ENCODE measurements at regions of chr22 and their contacts with region 1.

Region 1: DNA sequence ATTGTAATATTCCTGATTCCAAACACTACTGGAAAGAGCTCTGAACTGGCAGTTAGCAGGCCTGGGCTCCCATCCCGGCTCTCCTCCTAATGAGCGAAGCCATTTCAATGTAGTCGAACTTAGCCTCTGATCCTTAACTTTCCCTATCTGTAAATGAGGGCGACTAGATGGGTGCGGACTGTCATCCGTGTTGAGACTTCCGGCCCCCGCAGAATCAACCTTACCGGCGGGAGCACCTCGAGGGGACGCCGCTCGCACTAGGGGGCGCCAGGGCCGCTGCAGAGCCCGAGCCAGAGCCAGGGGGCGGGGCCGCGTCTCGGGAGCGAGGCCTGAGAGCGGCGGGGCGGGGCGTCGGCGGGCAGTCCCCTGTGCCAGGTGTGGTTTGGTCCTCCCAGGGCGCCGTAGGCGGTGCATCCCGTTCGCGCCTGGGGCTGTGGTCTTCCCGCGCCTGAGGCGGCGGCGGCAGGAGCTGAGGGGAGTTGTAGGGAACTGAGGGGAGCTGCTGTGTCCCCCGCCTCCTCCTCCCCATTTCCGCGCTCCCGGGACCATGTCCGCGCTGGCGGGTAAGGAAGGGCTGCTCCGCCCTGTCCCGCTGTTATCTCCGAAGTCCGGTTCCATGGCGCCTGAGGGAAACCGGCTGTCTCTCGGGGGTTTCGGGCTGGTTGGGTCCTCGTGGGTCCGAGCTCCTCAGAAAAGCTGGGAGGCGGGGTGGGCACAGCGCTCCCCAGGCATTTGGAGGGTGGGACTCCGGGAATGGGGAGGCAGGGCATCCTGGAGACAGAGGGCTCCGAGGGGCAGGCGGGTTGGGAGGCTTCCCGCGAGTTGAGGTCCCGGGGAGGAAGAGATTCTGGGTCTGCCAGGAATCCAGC is at the start of gene LIMK2:
- DNase-seq: peak; percentile 96 to 98 (median 97)
- ATAC-seq: peak; percentile 89 to 95 (median 94)
- H3K4me3 ChIP-seq: peak within 1 kb of the TSS; percentile 61 to 97 (median 84)
- H3K27ac ChIP-seq: peak within 1 kb of the TSS; percentile 29 to 92 (median 86)
- H3K4me1 ChIP-seq: peaks cover 0 to 66% (median 47%) of the 10 kb centered on the region in 12 donors
- H3K27me3 ChIP-seq: no peaks in the 10 kb centered on the region
- CTCF ChIP-seq: peak; percentile 74 to 99 (median 91)
- POLR2A ChIP-seq: peak in 1 of 2 donors; percentile 58
- total RNA-seq, gene LIMK2: 7.1 to 33.3 (median 9.4) TPM

Region 2: GRCh38 chr22:30668386-30668710 is 543.7 kb before region 1 on chr22:
- intact Hi-C with region 1: no loop called
- DNase-seq: no peak
- ATAC-seq: no peak
- H3K4me3 ChIP-seq: peak overlapping the region; percentile 48 to 87 (median 76)
- H3K27ac ChIP-seq: peak overlapping the region in 5 of 12 donors; percentile 9 to 71 (median 68)
- H3K4me1 ChIP-seq: peaks cover 0 to 19% (median 11%) of the 10 kb centered on the region in 12 donors
- H3K27me3 ChIP-seq: no peaks in the 10 kb centered on the region
- CTCF ChIP-seq: no peak
- POLR2A ChIP-seq: no peak

Region 3: GRCh38 chr22:31148953-31149627 is 63.0 kb before region 1 on chr22:
- intact Hi-C with region 1: no loop called
- DNase-seq: peak; percentile 74 to 79 (median 76)
- ATAC-seq: peak; percentile 91 to 97 (median 96)
- H3K4me3 ChIP-seq: no peak overlapping the region
- H3K27ac ChIP-seq: peak overlapping the region; percentile 37 to 85 (median 74)
- H3K4me1 ChIP-seq: peaks cover 0 to 14% (median 10%) of the 10 kb centered on the region in 12 donors
- H3K27me3 ChIP-seq: no peaks in the 10 kb centered on the region
- CTCF ChIP-seq: peak; percentile 81 to 98 (median 94)
- POLR2A ChIP-seq: no peak

Region 4: DNA sequence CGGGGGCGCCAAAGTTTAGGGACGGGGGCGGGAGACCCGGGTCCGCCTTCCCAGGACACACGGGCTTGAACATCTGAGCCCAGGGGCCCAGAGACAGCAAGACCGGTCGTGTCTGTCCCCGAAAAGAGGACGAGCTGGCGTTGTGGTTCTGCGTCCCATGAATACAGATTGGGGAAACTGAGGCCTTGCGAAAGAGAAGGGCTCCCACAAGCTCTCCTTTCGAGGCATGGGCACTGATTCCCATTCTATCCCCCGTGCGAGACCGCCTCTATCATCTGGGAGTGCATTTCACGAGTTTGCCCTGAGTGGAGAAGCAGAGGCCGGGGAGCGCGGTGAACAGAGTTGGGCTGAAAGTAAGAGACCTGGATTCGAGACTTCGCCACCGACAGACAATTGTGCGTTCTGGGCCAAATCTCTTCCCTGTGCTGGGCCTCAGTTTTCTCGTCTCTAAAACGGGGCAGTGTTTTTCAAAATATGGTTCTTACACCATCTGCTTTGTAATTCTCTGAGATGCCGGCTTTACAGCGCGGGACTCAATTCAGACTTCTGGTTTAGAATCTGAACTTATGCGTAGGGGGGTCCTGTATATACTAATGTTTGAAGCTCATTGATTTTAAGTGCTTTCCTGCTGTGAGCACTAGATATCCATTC is 51.6 kb before region 1 on chr22:
- intact Hi-C with region 1: loop called in 2 of 10 experiments (anchors 5 kb)
- DNase-seq: peak in 1 of 5 donors; percentile 33
- ATAC-seq: peak; percentile 29 to 63 (median 54)
- H3K4me3 ChIP-seq: peak overlapping the region; percentile 75 to 95 (median 88)
- H3K27ac ChIP-seq: peak overlapping the region; percentile 75 to 96 (median 90)
- H3K4me1 ChIP-seq: peaks cover 0 to 39% (median 29%) of the 10 kb centered on the region in 12 donors
- H3K27me3 ChIP-seq: no peaks in the 10 kb centered on the region
- CTCF ChIP-seq: no peak
- POLR2A ChIP-seq: no peak

Region 5: GRCh38 chr22:31230871-31231621 is 18.9 kb after region 1 on chr22:
- intact Hi-C with region 1: loop called in 2 of 10 experiments (anchors 1 to 2 kb)
- DNase-seq: peak in 2 of 5 donors; percentile 46
- ATAC-seq: peak; percentile 73 to 77 (median 76)
- H3K4me3 ChIP-seq: no peak overlapping the region
- H3K27ac ChIP-seq: peak overlapping the region in 11 of 12 donors; percentile 61 to 95 (median 70)
- H3K4me1 ChIP-seq: peaks cover 5 to 80% (median 35%) of the 10 kb centered on the region in 12 donors
- H3K27me3 ChIP-seq: no peaks in the 10 kb centered on the region
- CTCF ChIP-seq: peak; percentile 53 to 82 (median 68)
- POLR2A ChIP-seq: no peak

Region 6: GRCh38 chr22:31253949-31254348 is 41.9 kb after region 1 on chr22:
- intact Hi-C with region 1: loop called in 2 of 10 experiments (anchors 5 to 10 kb)
- DNase-seq: peak in 4 of 5 donors; percentile 43 to 52 (median 48)
- ATAC-seq: peak; percentile 52 to 83 (median 68)
- H3K4me3 ChIP-seq: no peak overlapping the region
- H3K27ac ChIP-seq: peak overlapping the region in 9 of 12 donors; percentile 5 to 69 (median 46)
- H3K4me1 ChIP-seq: peaks cover 7 to 58% (median 33%) of the 10 kb centered on the region in 12 donors
- H3K27me3 ChIP-seq: no peaks in the 10 kb centered on the region
- CTCF ChIP-seq: peak in 5 of 12 donors; percentile 7 to 41 (median 25)
- POLR2A ChIP-seq: no peak

Region 7: DNA sequence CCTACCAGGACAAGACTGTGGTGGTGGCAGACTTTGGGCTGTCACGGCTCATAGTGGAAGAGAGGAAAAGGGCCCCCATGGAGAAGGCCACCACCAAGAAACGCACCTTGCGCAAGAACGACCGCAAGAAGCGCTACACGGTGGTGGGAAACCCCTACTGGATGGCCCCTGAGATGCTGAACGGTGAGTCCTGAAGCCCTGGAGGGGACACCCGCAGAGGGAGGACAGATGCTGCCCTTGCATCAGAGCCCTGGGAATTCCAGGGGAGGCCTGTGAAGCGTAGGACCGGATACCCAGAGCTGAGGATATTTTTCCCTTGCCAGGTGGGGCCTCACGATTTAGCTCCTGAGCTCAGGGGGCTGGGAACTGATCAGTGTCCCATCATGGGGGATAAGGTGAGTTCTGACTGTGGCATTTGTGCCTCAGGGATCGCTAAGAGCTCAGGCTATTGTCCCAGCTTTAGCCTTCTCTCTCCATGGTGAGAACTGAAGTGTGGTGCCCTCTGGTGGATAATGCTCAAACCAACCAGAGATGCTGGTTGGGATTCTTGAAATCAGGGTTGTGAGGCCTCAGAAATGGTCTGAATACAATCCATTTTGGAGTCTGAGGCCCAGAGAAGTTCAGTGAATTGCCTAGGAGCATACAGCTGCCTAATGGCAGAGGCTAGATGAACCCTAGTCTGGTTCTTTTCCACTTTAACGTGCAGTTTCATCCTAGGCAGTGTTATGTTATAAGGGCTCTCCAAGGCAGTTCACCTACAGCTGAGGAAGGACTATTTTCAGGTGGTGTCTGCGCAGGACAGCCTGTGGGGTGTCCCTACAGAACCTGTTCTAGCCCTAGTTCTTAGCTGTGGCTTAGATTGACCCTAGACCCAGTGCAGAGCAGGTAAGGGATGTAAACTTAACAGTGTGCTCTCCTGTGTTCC is 60.7 kb after region 1 on chr22:
- intact Hi-C with region 1: loop called in 7 of 10 experiments (anchors 2 to 10 kb)
- DNase-seq: peak in 2 of 5 donors; percentile 44 to 54
- ATAC-seq: peak; percentile 56 to 78 (median 75)
- H3K4me3 ChIP-seq: no peak overlapping the region
- H3K27ac ChIP-seq: no peak overlapping the region
- H3K4me1 ChIP-seq: peaks cover 0 to 17% (median 4%) of the 10 kb centered on the region in 12 donors
- H3K27me3 ChIP-seq: no peaks in the 10 kb centered on the region
- CTCF ChIP-seq: peak; percentile 63 to 81 (median 70)
- POLR2A ChIP-seq: no peak

Region 8: GRCh38 chr22:31290494-31291471 is 78.7 kb after region 1 on chr22:
- intact Hi-C with region 1: loop called in 2 of 10 experiments (anchors 5 kb)
- DNase-seq: peak; percentile 94 to 98 (median 97)
- ATAC-seq: peak; percentile 90 to 94 (median 92)
- H3K4me3 ChIP-seq: peak overlapping the region; percentile 43 to 93 (median 70)
- H3K27ac ChIP-seq: peak overlapping the region; percentile 75 to 99 (median 96)
- H3K4me1 ChIP-seq: peaks cover 2 to 80% (median 50%) of the 10 kb centered on the region in 12 donors
- H3K27me3 ChIP-seq: no peaks in the 10 kb centered on the region
- CTCF ChIP-seq: no peak
- POLR2A ChIP-seq: peak; percentile 85 to 95

Measured in heart left ventricle (tissue), 16 donors.